Activated naive CD4-positive, alpha-beta T cell treated with anti-CD3 and anti-CD28 coated beads for 36 hours (primary cell): ENCODE measurements at regions of chr1 and their contacts with region 1.

Region 1: DNA sequence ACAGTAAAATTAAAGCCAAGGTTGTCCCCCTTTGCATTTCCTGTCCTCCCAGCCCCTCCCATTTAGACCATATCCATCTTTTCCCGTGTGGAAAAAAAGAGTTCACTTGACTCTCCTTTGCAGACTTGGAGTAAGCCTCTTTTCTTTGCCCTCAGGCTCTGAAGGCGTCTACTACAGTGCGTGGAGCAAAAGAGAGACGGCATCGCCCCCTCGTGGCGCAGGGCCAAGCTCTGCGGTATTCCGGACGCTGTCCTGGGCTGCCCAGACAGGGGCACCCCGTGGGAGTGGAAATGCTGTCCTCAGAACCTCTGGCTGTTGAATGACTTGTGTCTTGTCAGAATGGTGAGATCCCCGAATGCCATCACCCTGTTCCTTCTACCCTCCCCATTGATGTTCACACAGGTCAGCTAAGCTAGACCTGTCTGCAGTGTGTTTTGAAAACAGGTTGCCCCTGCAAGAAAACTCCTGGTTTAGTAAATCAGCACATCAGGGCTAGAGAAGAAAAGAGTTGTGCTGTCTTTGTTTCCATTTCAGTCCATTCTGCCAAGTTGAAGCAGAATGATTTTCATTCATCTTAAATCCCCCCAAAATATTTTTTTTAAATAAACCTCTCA is 12.3 kb upstream of the GJA8 start:
- DNase-seq: peak; percentile 83
- H3K4me3 Mint-ChIP-seq: no peak overlapping the region
- H3K27ac Mint-ChIP-seq: no peak overlapping the region
- H3K4me1 Mint-ChIP-seq: peaks cover 2% of the 10 kb centered on the region
- H3K27me3 Mint-ChIP-seq: no peaks in the 10 kb centered on the region

Region 2: GRCh38 chr1:147494998-147495580 is 395.2 kb before region 1 on chr1:
- CTCF ChIA-PET with region 1: interaction called, 9 read pairs
- intact Hi-C with region 1: loop called (anchors 1 kb)
- DNase-seq: peak; percentile 82
- H3K4me3 Mint-ChIP-seq: no peak overlapping the region
- H3K27ac Mint-ChIP-seq: no peak overlapping the region
- H3K4me1 Mint-ChIP-seq: no peaks in the 10 kb centered on the region
- H3K27me3 Mint-ChIP-seq: no peaks in the 10 kb centered on the region

Region 3: DNA sequence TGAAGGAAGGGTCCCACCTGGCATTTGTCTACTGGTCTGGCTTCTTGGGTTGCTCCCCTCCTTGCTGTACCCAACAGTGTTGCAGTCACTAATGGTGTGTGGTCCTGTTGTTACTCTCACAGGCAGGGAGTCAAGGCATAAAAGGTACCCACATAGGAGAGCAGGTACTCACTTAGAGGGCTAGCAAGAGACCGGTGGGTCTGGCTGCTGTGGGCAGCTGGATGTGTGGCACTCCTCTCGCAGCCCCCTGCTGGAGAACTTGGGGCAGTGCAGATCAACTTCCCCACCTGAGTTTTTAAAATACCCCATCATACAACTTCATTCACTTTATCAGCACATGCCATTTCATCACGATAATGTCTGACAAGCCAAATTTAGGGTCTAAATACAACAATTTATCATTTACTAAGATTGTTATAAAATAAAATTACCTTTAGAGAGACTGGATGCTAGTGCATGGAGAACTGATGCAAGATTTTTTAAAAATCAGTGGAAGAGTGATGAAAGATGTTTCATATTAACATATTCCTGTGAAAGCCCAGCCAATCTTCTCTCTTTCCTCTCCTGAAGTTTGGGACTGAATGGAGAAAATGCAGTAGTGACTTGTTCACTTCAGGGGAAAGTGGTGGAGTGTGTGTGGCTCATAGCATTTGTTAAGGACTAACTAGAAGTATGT is 262.7 kb before region 1 on chr1:
- CTCF ChIA-PET with region 1: interaction called, 3 read pairs
- intact Hi-C with region 1: loop called (anchors 5 kb)
- DNase-seq: peak; percentile 62
- H3K4me3 Mint-ChIP-seq: no peak overlapping the region
- H3K27ac Mint-ChIP-seq: no peak overlapping the region
- H3K4me1 Mint-ChIP-seq: peaks cover 25% of the 10 kb centered on the region
- H3K27me3 Mint-ChIP-seq: no peaks in the 10 kb centered on the region

Region 4: DNA sequence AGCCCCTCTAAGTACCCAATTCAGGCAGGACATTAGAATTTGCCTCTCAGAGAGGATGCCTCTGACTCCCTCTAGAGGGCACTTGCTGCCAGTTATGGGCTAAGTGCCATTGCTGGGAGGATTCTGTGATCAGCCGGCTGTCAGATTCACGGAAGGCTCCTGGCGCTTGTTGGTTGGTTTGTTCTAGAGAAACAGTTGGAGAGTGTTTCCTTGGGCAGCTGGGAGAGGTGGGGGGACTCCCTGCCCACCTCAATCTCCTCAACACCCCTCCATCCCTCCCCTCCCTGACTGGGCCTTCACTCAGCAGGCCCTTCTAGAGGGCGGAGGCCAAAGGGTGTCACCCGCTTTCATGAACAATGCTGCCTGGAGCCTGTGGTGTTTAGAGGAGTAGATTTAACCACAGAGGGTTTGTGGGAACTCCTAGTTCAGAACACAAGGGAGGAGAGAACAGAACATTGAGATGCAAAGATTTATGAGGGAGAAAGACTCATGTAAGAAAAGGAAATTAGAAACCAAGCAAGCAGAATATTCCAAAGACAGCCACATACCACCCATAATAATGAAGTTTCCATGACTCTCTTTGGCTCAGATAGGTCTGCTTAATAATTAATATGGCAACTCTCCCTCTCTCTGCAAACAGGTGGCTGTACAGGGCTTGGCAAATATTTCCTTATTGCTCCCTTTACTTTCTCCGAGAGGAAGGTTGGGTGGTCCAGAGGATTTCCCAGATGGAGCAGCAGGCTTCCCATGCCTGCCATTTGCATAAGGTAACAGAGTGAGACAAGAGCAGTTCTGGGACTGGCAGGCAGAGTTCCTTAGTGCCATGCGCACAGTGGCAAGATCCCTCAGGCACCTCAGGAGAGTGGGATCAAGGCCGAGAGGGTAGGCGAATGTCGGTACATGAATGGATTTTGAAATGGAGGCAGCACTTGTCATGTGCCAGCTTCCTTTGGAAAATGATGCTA is 190.0 kb before region 1 on chr1:
- CTCF ChIA-PET with region 1: interaction called, 14 read pairs
- intact Hi-C with region 1: loop called (anchors 1 kb)
- DNase-seq: peak; percentile 78
- H3K4me3 Mint-ChIP-seq: no peak overlapping the region
- H3K27ac Mint-ChIP-seq: no peak overlapping the region
- H3K4me1 Mint-ChIP-seq: peaks cover 6% of the 10 kb centered on the region
- H3K27me3 Mint-ChIP-seq: no peaks in the 10 kb centered on the region

Region 5: DNA sequence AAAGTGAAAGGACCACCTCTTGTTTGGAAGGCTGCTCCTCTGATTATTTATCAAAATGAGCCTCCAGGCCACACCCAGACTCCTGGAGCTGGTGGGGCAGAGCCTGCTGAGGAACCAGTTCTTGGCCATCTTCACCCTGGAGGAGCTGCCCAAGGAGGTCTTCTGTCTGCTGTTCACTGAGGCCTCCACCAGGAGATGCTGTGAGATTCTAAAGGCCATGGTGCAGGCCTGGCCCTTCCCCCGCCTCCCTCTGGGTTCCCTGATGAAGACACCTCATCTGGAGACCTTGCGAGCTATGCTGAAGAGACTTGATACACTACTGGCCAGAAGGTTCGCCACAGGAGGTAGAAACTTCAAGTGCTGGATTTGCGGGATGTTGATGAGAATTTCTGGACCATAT is 49.4 kb before region 1 on chr1:
- CTCF ChIA-PET with region 1: interaction called, 4 read pairs
- intact Hi-C with region 1: loop called (anchors 2 kb)
- DNase-seq: peak; percentile 29
- H3K4me3 Mint-ChIP-seq: no peak overlapping the region
- H3K27ac Mint-ChIP-seq: no peak overlapping the region
- H3K4me1 Mint-ChIP-seq: no peaks in the 10 kb centered on the region
- H3K27me3 Mint-ChIP-seq: no peaks in the 10 kb centered on the region